AG04449 (cell line): ENCODE measurements at regions of chr2 and their contacts with region 1.

Region 1: DNA sequence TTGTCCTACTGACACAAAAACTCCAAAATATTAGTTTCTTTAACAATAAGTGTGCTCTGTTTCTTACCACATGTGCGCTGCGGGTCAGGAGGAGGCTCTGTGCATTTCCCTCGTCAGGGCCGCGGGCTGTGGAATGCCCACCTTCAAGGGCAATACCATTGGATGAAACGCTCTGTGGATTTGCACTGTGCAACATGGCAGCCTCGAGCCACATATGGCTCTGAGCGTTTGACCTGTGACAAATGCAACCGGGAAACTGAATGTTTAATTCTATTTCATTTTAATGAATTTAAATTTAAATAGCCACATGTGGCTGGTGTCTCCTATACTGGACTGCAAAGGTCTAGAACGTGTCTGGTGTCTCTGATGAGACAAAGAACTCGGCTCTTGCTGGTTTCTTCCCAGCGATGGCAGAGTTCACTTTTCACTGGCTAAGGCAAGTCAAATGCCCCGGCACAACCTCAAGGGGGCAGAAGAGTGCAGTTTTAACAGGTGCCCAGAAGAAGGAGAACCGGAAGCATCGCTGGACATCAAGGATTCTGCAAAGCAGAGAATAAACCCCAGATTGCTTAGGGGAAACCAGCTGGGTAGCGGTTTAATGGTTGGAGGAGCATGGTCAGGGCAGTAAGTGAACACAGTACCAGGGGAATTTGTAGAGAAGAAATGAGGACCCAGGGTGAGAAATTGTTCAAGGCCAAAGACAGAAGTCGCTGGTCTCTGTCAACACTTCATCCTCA is 37.0 kb upstream of the TMEM18 start:
- DNase-seq: no peak
- H3K4me3 ChIP-seq: no peak overlapping the region
- CTCF ChIP-seq: peak; percentile 83

Region 2: GRCh38 chr2:567850-568638 is 146.1 kb before region 1 on chr2:
- CTCF ChIA-PET with region 1: no interaction called
- POLR2A ChIA-PET with region 1: no interaction called
- DNase-seq: peak; percentile 4
- H3K4me3 ChIP-seq: peak overlapping the region; percentile 15; the same call in 1 of the 2 replicates
- CTCF ChIP-seq: no peak

Region 3: DNA sequence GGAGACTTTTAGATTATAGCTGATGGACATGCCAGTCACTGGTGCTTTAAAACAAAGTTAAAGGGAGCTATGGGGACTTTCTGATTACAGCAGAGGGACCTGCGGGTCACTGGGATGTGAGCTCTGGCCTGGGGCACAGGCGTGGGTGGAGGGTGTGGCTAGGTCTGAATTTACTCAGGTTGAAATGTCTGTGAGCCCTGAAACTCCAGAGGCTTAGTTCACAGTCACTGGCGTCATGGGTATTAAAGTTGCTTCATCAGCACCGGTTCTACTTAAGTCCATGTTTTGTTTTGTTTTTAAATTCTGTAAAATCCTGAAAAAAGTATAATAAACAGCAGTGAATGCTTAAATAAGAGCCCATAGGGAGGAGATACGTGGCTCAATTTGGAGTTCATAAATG is 12.0 kb after region 1 on chr2:
- CTCF ChIA-PET with region 1: interaction called, 14 read pairs
- POLR2A ChIA-PET with region 1: interaction called, 3 read pairs
- DNase-seq: no peak
- H3K4me3 ChIP-seq: no peak overlapping the region
- CTCF ChIP-seq: no peak

Region 4: DNA sequence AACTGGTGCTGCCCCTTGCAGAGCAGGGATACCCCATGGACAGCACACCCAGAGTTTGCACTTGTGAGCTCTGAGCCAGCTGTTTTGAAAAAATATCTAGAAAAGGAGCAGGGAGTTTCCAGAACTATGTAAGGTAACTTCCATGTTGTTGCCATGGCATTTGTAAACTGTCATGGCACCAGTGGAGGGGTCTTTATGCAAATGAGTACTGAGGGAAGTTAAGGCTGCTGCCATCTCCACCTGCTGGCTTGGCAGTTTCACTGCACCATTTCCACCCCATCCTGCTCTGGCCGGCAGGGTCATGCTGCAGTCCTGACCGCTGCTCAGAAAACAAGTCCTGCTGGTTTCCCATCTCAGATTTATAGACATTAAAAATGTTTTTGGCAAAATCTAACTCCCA is 184.1 kb after region 1 on chr2:
- CTCF ChIA-PET with region 1: no interaction called
- POLR2A ChIA-PET with region 1: no interaction called
- DNase-seq: no peak
- H3K4me3 ChIP-seq: no peak overlapping the region
- CTCF ChIP-seq: no peak

Region 5: DNA sequence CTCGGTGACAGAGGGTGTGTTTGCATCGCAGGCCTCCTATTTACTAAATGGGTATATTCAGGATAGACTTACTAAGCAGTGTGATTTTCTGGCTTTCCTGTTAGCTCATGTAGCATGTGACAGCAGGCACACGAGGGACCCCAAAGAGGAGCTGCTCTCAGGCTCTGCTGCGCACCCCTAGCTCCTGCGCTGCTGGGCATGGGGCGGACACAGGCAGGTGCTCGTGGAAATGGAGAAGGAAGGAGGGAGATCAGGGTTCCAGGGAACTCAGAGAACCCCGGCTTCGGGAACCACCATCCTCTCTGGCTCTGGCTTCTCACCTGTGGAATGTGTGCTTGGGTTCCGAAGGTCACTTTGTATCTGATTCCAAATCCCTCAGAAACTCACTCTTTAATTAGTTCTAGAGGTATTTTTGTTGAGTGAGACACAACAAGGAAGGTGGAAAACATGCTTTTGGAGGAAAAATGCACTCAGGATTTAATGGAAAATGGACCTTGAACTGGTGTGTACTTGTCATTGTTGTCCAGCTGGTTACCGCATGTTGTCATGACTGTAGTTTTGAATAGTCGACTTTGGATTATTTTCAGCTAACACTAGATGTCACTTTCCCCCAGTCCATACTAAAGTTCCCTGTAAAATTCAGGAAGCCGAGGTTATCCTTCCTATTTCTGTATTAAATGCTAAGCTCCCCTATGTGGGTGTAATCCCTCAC is 240.0 kb after region 1 on chr2:
- CTCF ChIA-PET with region 1: interaction called, 11 read pairs
- POLR2A ChIA-PET with region 1: no interaction called
- DNase-seq: no peak
- H3K4me3 ChIP-seq: no peak overlapping the region
- CTCF ChIP-seq: peak; percentile 20

Region 6: DNA sequence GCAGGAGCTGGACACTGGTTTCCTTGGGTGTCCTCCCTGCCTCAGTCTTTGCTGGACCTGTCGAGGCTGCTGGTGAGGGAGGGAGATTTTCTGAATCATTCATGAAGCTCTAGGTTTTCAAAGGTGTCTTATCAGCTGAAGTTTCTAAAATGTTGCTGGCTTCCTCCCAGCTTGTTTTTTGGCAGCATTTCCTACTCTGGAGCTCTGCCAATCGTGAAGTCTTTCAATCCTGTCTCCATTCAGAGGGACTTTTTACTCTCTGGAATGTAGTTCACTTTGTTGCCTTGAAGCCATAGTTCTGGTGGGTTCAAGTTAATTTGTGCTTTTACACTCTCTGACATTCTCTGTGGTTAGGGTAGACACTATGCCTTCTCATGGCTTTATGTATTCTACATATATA is 260.3 kb after region 1 on chr2:
- CTCF ChIA-PET with region 1: no interaction called
- POLR2A ChIA-PET with region 1: no interaction called
- DNase-seq: no peak
- H3K4me3 ChIP-seq: no peak overlapping the region
- CTCF ChIP-seq: no peak

Region 7: GRCh38 chr2:1538663-1539062 is 824.5 kb after region 1 on chr2:
- CTCF ChIA-PET with region 1: interaction called, 198 read pairs
- POLR2A ChIA-PET with region 1: no interaction called
- DNase-seq: no peak
- H3K4me3 ChIP-seq: no peak overlapping the region
- CTCF ChIP-seq: peak; percentile 67